Right ventricle myocardium superior (tissue), 1 donor: ENCODE measurements at regions of chr14 and their contacts with region 1.

Region 1: DNA sequence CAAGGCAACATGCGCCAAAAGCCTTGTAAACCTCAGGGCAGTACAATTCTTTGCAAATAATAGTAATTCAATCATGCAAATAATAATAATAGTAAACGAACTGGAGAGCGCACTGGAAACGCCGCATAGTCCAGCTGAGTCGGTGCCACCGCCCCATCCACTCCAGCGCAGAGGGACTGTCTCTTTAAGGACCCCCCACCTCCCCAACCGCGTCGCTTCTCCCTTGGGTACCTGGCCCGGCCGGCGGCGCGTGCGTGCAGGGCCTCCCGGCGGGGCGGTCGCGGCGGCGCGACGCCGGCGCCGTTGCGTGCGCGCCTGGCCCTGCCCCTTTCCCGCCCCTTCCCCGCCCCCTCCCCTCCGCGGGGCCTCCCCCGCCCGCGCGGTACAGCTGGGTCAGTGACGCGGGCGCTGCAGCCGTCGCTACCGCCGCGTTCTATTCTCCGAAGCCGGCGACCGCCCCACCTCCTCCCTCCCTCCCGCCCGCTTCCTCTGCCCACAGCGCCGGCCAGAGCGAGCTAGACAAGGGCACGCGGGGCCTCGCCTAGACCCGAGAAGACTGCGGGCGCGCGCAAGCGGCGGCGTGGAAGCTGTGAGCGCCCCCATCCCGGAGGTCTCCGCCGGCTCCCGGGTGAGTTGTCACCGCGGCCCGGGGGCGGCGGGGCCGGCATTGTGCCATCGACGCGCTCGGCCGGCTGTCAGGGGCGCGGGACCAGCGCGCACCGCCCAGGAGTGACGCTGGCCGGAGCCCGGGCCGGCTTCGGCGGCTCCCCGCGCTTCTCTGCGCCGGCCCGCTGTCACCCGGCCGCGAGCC is at the start of gene SUSD6:
- DNase-seq: peak; percentile 95
- ATAC-seq: peak; percentile 89
- total RNA-seq, gene SUSD6: 20.8 TPM

Region 2: GRCh38 chr14:69664865-69665526 is 53.6 kb after region 1 on chr14:
- intact Hi-C with region 1: loop called (anchors 2 kb)
- DNase-seq: peak; percentile 57
- ATAC-seq: peak; percentile 83

Region 3: GRCh38 chr14:69712599-69713088 is 101.2 kb after region 1 on chr14:
- intact Hi-C with region 1: loop called (anchors 5 kb)
- DNase-seq: peak; percentile 73
- ATAC-seq: peak; percentile 67